ENCODE measurements at regions of chr17 and their contacts with region 1.

Region 1: DNA sequence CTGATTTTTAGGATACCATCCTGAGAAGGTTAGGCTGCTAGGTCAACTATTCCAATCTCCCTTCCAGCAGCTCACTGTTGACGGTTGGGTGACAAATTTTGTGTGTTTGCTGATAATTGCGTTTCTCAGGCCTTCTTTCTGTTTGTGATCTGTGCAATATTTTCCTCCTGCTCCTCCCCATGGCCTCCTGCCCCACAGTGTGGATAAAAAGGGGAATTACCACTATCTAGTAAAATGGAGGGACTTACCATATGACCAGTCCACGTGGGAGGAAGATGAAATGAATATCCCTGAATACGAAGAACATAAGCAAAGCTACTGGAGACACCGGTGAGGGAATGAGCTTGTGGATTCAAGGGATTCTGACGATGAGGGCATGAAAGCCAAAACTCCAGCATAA is 9.2 kb downstream of the CHD3 start:
- DNase-seq: peak; percentile 72
- H3K4me3 ChIP-seq: no peak overlapping the region
- H3K27ac ChIP-seq: no peak overlapping the region; a peak in 1 of 4 replicates
- H3K4me1 ChIP-seq: no peaks in the 10 kb centered on the region
- H3K27me3 ChIP-seq: no peaks in the 10 kb centered on the region
- CTCF ChIP-seq: peak; percentile 70
- EP300 ChIP-seq: no peak
- RAD21 ChIP-seq: peak; percentile 92

Region 2: DNA sequence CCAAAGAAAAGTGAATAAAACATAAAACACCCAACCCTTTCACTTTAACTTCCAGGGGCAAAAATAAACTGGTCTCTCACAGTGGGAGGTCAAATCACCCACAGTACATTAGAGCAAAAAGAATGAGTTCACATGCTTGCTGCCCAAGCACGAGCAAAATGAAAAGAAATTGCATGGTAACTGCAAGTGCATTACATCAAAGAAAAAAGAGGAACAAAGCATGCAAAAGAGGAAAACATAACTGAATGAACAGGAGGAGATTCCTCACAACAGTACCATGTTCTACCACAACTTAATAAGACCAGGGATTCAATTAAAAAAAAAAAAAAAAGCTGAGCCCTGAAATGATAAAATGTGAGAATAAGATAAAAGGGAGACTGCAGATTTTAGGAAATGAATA is 168.0 kb before region 1 on chr17:
- CTCF ChIA-PET with region 1: no interaction called
- POLR2A ChIA-PET with region 1: no interaction called
- DNase-seq: no peak
- H3K4me3 ChIP-seq: no peak overlapping the region
- H3K27ac ChIP-seq: no peak overlapping the region
- H3K4me1 ChIP-seq: no peaks in the 10 kb centered on the region
- H3K27me3 ChIP-seq: no peaks in the 10 kb centered on the region
- CTCF ChIP-seq: no peak
- EP300 ChIP-seq: no peak
- RAD21 ChIP-seq: no peak

Region 3: DNA sequence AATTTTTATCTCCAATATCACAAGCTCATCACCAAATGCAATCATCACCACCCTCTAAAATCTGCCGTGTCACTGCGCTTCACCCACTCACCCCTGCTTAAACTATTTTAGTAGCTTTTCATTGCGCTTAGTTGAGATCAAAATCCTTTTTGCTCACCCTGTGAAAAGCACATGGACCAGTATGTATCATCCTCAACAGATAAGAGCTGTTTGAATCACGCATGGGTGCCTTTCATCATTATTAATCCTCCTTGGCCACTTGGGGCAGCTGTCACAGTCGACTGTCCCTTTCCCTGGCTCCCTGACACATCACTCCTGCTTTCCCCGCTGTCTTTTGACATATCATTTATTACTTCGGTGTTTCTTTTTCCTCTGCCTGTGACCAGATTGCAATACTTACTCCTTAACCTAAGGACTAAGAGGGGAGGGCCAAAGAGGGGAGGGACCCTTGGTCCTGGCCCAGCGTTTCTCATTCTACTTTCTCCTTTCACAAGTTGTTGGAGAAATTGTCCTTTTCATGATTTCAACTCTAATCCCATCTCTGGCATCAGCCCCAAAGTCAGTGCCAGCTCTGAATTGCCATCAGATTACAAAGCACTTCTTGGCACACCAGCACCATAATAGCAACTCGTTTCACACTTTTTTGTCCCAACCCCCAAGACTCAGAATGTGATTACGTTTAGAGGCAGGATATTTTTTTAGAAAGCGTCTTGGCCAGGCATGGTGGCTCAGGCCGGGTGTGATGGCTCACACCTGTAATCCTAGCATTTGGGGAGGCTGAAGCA is 72.4 kb before region 1 on chr17:
- CTCF ChIA-PET with region 1: interaction called, 19 read pairs
- POLR2A ChIA-PET with region 1: no interaction called
- DNase-seq: peak; percentile 69
- H3K4me3 ChIP-seq: no peak overlapping the region
- H3K27ac ChIP-seq: no peak overlapping the region
- H3K4me1 ChIP-seq: peaks cover 0 to 12% of the 10 kb centered on the region in 2 experiments; a peak in 1 of 4 replicates
- H3K27me3 ChIP-seq: peaks cover 2% of the 10 kb centered on the region
- CTCF ChIP-seq: peak; percentile 40
- EP300 ChIP-seq: no peak
- RAD21 ChIP-seq: peak; percentile 28; the same call in 1 of the 2 replicates

Region 4: DNA sequence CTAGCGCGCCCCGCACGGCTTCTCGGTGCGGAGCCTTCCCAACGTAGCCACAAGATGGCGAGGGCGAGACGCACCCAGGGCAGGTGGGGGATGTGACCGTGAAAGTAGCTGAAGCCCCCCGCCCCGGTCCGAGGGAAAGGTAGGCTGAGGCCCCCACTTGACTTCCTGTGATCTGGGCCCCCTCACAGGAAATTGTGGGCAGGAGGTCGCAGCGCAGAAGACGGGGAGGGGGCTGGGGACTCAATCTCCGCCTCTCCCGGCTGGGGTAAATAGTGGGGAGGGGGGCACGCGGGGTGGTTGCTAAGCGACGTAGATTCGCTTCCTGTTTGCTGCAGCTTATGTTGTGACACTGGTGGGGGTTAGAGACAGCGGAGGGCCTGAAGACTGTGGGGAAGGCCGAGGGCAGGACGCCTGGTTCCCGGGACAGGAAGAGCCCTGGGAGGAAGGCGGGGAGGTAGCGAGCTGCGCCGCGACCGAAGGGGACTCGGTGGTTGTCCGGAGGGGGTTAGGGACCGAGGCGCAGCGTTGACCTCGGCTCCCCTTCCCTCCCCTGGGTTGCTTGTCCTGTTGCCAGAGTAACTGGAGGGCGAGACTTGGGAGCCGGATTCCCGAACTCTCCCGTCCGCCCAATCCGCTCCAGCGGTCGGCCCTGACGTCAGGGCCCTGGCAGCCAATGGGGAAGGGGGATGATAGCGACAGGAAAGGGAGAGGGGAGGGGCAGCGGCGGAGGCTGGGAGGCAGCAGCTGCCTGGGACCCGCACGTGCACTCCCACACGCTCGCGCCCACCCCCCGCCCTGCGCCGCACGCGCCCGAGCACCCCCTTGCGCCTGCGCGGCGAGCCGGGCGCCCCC is 62.6 kb before region 1 on chr17:
- CTCF ChIA-PET with region 1: interaction called, 11 read pairs
- POLR2A ChIA-PET with region 1: no interaction called
- DNase-seq: peak; percentile 92
- H3K4me3 ChIP-seq: peak overlapping the region; percentile 90 to 97
- H3K27ac ChIP-seq: peak overlapping the region; percentile 98 to 99
- H3K4me1 ChIP-seq: peaks cover 21 to 27% of the 10 kb centered on the region in 2 experiments
- H3K27me3 ChIP-seq: peaks cover 7% of the 10 kb centered on the region; the same call in 1 of the 2 replicates
- CTCF ChIP-seq: peak; percentile 77
- EP300 ChIP-seq: no peak; a peak in 2 of 4 replicates
- RAD21 ChIP-seq: peak; percentile 75

Region 5: DNA sequence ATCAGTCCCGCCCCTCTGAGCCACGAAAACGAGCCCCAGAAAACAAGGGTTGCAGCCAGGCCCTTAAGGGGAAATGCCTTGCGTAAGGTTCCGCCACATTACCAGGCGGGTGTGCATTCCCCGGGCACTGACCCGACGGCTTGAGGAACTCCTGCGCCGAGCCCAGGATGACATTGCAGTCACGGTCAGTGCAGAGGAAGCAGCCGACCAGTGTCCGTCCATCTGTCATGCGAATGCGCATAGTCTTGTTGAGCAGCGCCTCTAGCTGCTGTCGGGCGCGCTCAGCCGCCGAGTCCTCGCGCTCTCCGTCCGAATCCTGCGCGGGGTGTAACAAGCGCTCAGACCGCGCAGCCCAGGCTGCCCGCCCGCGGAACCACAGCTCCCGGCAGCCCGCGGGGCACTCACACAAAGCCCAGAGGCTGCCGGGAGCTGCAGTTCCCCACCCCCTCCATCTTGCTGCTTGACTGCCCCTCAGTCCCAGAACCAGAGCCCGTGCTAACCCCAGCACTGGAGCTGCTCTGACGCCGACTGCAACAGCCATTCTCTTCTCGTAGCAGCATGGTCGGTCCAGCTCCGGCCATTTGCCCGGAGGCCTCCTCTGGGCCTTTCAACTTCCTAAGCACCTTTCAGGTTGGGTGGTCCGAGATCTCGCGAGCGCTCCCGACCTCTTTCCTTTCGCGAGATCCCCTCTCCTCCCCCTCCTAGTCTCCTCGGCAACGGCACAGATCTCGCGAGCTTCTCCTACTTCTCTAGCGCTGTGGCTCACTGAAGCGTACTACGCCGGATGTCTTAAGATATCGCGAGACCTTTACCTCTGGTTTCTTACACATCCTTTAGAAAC is 40.7 kb before region 1 on chr17 and contains the start of gene NAA38:
- CTCF ChIA-PET with region 1: interaction called, 143 read pairs
- POLR2A ChIA-PET with region 1: interaction called, 3 read pairs
- DNase-seq: peak; percentile 90
- H3K4me3 ChIP-seq: peak within 1 kb of the TSS; percentile 72 to 77
- H3K27ac ChIP-seq: peak within 1 kb of the TSS; percentile 93 to 100
- H3K4me1 ChIP-seq: peaks cover 23 to 35% of the 10 kb centered on the region in 2 experiments; a peak in 3 of 4 replicates
- H3K27me3 ChIP-seq: no peaks in the 10 kb centered on the region
- CTCF ChIP-seq: peak; percentile 47
- EP300 ChIP-seq: 0 out of 4 replicates have a peak, but pooled peaks of 1 of the 2 experiments have one; percentile 6
- RAD21 ChIP-seq: peak; percentile 38
- polyA plus RNA-seq, gene NAA38: 133 and 202 TPM in 2 replicates

Region 6: GRCh38 chr17:7862692-7863437 is 34.9 kb before region 1 on chr17:
- CTCF ChIA-PET with region 1: interaction called, 143 read pairs
- POLR2A ChIA-PET with region 1: interaction called, 3 read pairs
- DNase-seq: peak; percentile 71
- H3K4me3 ChIP-seq: no peak overlapping the region; a peak in 1 of 4 replicates
- H3K27ac ChIP-seq: peak overlapping the region in 1 of 2 experiments; percentile 39; a peak in 1 of 4 replicates
- H3K4me1 ChIP-seq: peaks cover 9 to 19% of the 10 kb centered on the region in 2 experiments; a peak in 2 of 4 replicates
- H3K27me3 ChIP-seq: no peaks in the 10 kb centered on the region
- CTCF ChIP-seq: peak; percentile 87
- EP300 ChIP-seq: no peak
- RAD21 ChIP-seq: peak; percentile 87

Region 7: GRCh38 chr17:7867881-7868329 is 29.9 kb before region 1 on chr17:
- CTCF ChIA-PET with region 1: interaction called, 143 read pairs
- POLR2A ChIA-PET with region 1: interaction called, 3 read pairs
- DNase-seq: no peak
- H3K4me3 ChIP-seq: no peak overlapping the region
- H3K27ac ChIP-seq: no peak overlapping the region
- H3K4me1 ChIP-seq: peaks cover 0 to 3% of the 10 kb centered on the region in 2 experiments; a peak in 2 of 4 replicates
- H3K27me3 ChIP-seq: no peaks in the 10 kb centered on the region
- CTCF ChIP-seq: no peak
- EP300 ChIP-seq: no peak
- RAD21 ChIP-seq: no peak

Region 8: GRCh38 chr17:7915611-7916382 is 18.0 kb after region 1 on chr17 and contains the start of gene RNF227:
- CTCF ChIA-PET with region 1: interaction called, 12 read pairs
- POLR2A ChIA-PET with region 1: no interaction called
- DNase-seq: peak; percentile 93
- H3K4me3 ChIP-seq: peak within 1 kb of the TSS; percentile 57 to 62
- H3K27ac ChIP-seq: peak within 1 kb of the TSS; percentile 60 to 90
- H3K4me1 ChIP-seq: peaks cover 14 to 18% of the 10 kb centered on the region in 2 experiments; a peak in 2 of 4 replicates
- H3K27me3 ChIP-seq: no peaks in the 10 kb centered on the region
- CTCF ChIP-seq: no peak
- EP300 ChIP-seq: no peak
- RAD21 ChIP-seq: peak; percentile 11; the same call in 1 of the 2 replicates
- polyA plus RNA-seq, gene RNF227: 7.4 and 9.0 TPM in 2 replicates